ENCODE measurements at regions of chr17 and their contacts with region 1.

Region 1: GRCh38 chr17:8435245-8436168 is at the start of gene NDEL1:
- DNase-seq: peak; percentile 99 to 100 (median 100)
- ATAC-seq: peak; percentile 98 to 99 (median 98)
- H3K4me3 ChIP-seq: peak within 1 kb of the TSS; percentile 66 to 99 (median 90)
- H3K27ac ChIP-seq: peak within 1 kb of the TSS; percentile 94 to 100 (median 100)
- H3K4me1 ChIP-seq: peaks cover 0 to 40% (median 26%) of the 10 kb centered on the region in 12 donors
- H3K27me3 ChIP-seq: no peaks in the 10 kb centered on the region
- CTCF ChIP-seq: no peak
- POLR2A ChIP-seq: peak; percentile 92 to 99
- total RNA-seq, gene NDEL1: 23.3 to 35.2 (median 25.8) TPM

Region 2: DNA sequence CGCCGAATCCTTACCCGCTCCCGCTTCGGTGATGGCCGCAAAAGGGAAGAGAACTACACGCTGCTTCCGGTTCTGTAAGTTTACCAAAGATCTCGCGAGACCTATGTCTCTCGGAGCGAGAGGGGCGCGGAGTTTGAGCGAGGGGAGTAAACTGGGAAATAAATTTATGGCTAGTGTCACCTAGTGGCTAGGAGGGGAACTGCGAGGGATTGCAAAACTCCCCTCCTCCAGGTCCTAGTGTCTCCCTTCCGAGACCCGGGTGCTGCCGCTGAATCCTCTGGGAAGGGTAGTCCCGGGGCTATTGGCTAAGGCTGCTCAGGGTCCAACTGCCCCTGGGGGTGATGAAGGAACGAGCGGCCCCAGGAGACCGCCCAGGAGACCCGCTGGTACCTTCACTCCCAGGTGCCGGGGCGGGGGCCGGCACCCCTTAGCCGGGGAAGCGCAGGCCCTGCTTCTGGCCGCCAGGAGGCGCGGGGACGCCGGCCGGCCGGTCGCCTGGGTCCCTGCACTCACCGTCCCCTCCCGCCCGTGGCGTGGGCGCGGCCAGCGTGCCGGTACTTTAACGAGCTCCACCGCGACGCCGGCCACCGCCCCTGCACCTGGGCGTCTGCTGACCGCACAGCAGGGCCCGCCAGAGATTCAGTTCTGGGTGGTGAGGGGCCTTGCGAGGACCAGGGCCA is 52.2 kb before region 1 on chr17 and contains the start of gene RPL26:
- intact Hi-C with region 1: loop called in 2 of 10 experiments (anchors 1 to 10 kb)
- DNase-seq: peak; percentile 95 to 97 (median 96)
- ATAC-seq: peak; percentile 89 to 97 (median 92)
- H3K4me3 ChIP-seq: peak within 1 kb of the TSS; percentile 40 to 77 (median 70)
- H3K27ac ChIP-seq: peak within 1 kb of the TSS; percentile 12 to 93 (median 80)
- H3K4me1 ChIP-seq: peaks cover 0 to 51% (median 29%) of the 10 kb centered on the region in 12 donors
- H3K27me3 ChIP-seq: no peaks in the 10 kb centered on the region
- CTCF ChIP-seq: peak; percentile 96 to 99 (median 98)
- POLR2A ChIP-seq: peak in 1 of 2 donors; percentile 73
- total RNA-seq, gene RPL26: 967 to 1,970 (median 1,265) TPM

Region 3: GRCh38 chr17:8397203-8398045 is 38.1 kb before region 1 on chr17 and contains the start of gene RNF222:
- intact Hi-C with region 1: no loop called
- DNase-seq: no peak
- ATAC-seq: no peak
- H3K4me3 ChIP-seq: no peak within 1 kb of the TSS
- H3K27ac ChIP-seq: no peak within 1 kb of the TSS
- H3K4me1 ChIP-seq: peaks cover 0 to 6% (median 0%) of the 10 kb centered on the region in 12 donors
- H3K27me3 ChIP-seq: peaks cover 0 to 41% (median 21%) of the 10 kb centered on the region in 9 donors
- CTCF ChIP-seq: no peak
- POLR2A ChIP-seq: no peak
- total RNA-seq, gene RNF222: not detected

Region 4: DNA sequence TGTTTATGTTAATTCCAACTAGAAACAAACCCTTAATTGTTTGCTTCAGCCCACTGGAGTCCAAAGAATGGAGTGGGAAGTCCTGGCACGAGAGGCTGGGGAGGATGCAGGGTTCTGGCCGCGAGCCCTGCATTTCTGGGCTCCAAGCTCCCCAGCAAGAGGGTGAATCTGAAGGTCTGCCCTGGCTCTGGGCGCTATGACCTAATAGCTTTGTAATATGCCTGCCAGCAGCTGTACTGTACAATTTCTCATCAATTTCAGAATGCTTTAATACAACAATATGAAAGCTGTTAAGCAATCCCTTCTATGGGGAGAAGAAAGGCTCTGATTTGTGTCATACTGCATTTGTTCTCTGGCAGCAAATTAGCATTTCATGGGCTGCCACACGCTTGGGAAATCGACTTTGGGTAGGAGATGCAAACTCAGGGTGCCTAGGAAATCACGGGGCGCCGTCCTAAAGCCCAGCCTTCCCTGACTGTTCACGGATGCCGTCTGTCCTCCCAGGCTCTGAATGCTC is 44.0 kb after region 1 on chr17:
- intact Hi-C with region 1: loop called in 1 of 10 experiments (anchors 5 kb)
- DNase-seq: peak in 3 of 5 donors; percentile 43 to 57 (median 56)
- ATAC-seq: peak in 3 of 4 donors; percentile 65 to 67 (median 66)
- H3K4me3 ChIP-seq: no peak overlapping the region
- H3K27ac ChIP-seq: peak overlapping the region in 7 of 12 donors; percentile 17 to 58 (median 39)
- H3K4me1 ChIP-seq: peaks cover 0 to 16% (median 9%) of the 10 kb centered on the region in 12 donors
- H3K27me3 ChIP-seq: no peaks in the 10 kb centered on the region
- CTCF ChIP-seq: no peak
- POLR2A ChIP-seq: no peak

Region 5: GRCh38 chr17:8489841-8490240 is 54.3 kb after region 1 on chr17:
- intact Hi-C with region 1: no loop called
- DNase-seq: no peak
- ATAC-seq: no peak
- H3K4me3 ChIP-seq: no peak overlapping the region
- H3K27ac ChIP-seq: no peak overlapping the region
- H3K4me1 ChIP-seq: peaks cover 0 to 4% (median 0%) of the 10 kb centered on the region in 12 donors
- H3K27me3 ChIP-seq: no peaks in the 10 kb centered on the region
- CTCF ChIP-seq: no peak
- POLR2A ChIP-seq: no peak

Region 6: GRCh38 chr17:8585911-8586310 is 150.4 kb after region 1 on chr17:
- intact Hi-C with region 1: no loop called
- DNase-seq: no peak
- ATAC-seq: no peak
- H3K4me3 ChIP-seq: no peak overlapping the region
- H3K27ac ChIP-seq: no peak overlapping the region
- H3K4me1 ChIP-seq: peaks cover 0 to 23% (median 0%) of the 10 kb centered on the region in 12 donors
- H3K27me3 ChIP-seq: no peaks in the 10 kb centered on the region
- CTCF ChIP-seq: no peak
- POLR2A ChIP-seq: no peak